ENCODE measurements at regions of chr9 and their contacts with region 1.

Region 1: DNA sequence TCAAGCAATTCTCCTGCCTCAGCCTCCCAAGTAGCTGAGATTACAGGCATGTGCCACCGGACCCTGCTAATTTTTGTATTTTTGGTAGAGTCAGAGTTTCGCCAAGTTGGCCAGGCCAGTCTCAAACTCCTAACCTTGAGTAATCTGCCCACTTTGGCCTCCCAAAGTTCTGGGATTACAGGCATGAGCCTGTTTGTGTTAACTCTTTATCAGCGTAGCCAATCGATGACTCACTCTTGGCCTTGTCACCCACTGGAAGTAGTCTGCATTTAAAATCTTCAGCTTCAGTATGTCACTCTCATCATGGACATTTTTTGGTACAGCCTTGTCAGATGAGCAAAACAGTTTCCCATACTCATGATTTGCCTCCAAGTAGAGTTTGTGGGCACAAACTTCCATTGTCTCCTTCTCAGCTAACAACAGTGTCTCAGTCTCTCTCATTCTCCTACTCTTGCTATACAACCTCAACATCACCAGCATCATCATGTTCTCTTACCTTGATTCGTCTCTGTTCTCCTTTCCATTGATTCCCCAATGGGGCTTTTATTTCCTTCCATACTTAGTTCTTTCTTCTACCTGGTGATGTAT is 22.5 kb downstream of the MUSK start:
- ATAC-seq: no peak
- H3K4me3 ChIP-seq: no peak overlapping the region
- H3K27ac ChIP-seq: no peak overlapping the region
- H3K4me1 ChIP-seq: no peaks in the 10 kb centered on the region

Region 2: GRCh38 chr9:110141227-110141793 is 549.7 kb before region 1 on chr9:
- in situ Hi-C with region 1: no loop called
- ATAC-seq: peak in 3 of 8 experiments; percentile 44 to 82 (median 70)
- H3K4me3 ChIP-seq: no peak overlapping the region
- H3K27ac ChIP-seq: no peak overlapping the region
- H3K4me1 ChIP-seq: peaks cover 3 to 5% of the 10 kb centered on the region in 2 donors

Region 3: DNA sequence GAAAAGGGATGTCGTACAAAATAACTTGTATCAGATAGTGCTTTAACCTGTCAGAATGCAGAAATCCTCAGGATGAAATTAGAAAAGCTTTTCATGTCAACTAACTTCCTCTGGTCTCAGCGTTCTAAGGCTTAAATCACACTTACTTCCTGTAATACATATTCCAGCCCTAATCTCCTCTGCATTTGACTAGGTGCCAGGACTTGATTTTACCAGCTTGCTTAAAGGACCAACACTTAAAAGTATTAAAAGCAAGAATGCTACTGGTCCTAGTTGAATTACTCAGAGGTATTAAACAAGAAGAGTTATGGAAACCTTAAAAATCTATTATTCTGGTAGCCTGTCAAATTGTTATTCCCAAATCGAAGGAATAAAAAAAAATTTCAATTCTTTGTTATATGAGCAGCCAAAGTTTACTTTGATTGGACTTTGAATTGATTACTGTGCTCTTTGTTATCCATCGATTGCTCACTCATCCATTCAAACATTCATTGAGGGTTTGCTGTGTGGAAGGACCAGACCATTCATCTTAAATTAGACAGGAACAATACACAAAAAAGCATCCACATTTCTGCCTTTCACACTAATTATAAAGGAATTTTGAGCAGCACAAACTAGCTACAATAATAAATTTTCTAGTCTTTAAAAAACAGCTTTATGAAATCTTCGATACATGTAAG is 86.3 kb after region 1 on chr9:
- in situ Hi-C with region 1: loop called in 1 of 9 experiments (anchors 25 kb)
- ATAC-seq: peak in 1 of 8 experiments; percentile 25
- H3K4me3 ChIP-seq: no peak overlapping the region
- H3K27ac ChIP-seq: no peak overlapping the region
- H3K4me1 ChIP-seq: peaks cover 0 to 8% of the 10 kb centered on the region in 2 donors

Region 4: GRCh38 chr9:111029260-111029659 is 338.2 kb after region 1 on chr9:
- in situ Hi-C with region 1: no loop called
- ATAC-seq: no peak
- H3K4me3 ChIP-seq: no peak overlapping the region
- H3K27ac ChIP-seq: no peak overlapping the region
- H3K4me1 ChIP-seq: no peaks in the 10 kb centered on the region

Measured in motor neuron (in vitro differentiated cells).